Dorsolateral prefrontal cortex (tissue), 120 donors: ENCODE measurements at regions of chr2 and their contacts with region 1.

Region 1: GRCh38 chr2:134261398-134262131 is 7.7 kb downstream of the MGAT5 start:
- DNase-seq: no peak
- H3K4me3 ChIP-seq: no peak overlapping the region
- H3K27ac ChIP-seq: peak overlapping the region in 43 of 59 donors; percentile 1 to 97 (median 91)
- H3K27me3 ChIP-seq: no peaks in the 10 kb centered on the region
- CTCF ChIP-seq: no peak

Region 2: DNA sequence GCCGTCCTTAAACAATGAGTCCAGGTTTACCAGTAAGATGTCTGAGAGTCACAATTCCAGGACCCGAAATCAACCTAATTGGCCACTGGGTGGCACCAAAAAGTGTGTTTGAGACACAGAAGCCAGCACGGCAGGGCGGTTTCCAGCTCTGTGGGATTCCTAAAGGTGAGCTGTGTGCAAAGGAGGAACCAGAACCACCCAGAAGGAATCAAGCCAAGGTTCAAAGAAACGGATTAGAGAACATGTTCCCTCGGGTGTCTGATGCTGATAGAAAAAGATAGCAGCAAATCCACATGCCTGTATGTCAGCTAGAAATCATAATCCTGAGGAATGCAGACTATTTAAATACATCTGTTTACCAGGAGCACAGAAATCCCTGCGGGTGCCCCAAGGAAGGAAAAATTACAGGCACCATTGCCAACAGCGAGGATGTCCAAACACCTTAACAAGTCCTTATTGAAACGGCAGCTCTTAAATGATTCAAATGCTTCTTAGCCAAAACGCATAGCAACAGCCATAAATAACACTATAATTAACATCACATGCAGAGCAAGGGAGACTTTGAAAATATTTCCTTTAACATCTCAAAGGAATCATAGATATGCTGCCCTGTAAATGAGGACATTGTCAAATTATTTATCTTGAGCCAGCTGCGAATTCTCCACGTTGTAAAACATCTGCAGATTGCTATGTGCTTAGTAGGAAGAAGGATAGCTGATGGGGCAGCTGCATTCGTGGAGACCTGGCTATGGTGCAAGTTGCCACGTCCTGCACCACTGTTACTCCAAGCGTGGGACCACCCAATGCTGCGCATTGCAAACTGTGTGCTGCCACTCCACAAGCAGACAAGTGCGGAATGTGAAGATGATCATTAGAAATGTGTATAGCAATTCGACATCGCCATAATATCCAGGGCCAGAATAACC is 374.6 kb before region 1 on chr2:
- intact Hi-C with region 1: loop called in 1 of 2 experiments (anchors 10 kb)
- DNase-seq: peak; percentile 49 to 91 (median 84)
- H3K4me3 ChIP-seq: peak overlapping the region in 17 of 59 donors; percentile 1 to 37 (median 21)
- H3K27ac ChIP-seq: peak overlapping the region in 1 of 59 donors; percentile 10
- H3K27me3 ChIP-seq: peaks cover 0 to 2% (median 0%) of the 10 kb centered on the region in 45 donors
- CTCF ChIP-seq: peak; percentile 55 to 83 (median 72)

Region 3: DNA sequence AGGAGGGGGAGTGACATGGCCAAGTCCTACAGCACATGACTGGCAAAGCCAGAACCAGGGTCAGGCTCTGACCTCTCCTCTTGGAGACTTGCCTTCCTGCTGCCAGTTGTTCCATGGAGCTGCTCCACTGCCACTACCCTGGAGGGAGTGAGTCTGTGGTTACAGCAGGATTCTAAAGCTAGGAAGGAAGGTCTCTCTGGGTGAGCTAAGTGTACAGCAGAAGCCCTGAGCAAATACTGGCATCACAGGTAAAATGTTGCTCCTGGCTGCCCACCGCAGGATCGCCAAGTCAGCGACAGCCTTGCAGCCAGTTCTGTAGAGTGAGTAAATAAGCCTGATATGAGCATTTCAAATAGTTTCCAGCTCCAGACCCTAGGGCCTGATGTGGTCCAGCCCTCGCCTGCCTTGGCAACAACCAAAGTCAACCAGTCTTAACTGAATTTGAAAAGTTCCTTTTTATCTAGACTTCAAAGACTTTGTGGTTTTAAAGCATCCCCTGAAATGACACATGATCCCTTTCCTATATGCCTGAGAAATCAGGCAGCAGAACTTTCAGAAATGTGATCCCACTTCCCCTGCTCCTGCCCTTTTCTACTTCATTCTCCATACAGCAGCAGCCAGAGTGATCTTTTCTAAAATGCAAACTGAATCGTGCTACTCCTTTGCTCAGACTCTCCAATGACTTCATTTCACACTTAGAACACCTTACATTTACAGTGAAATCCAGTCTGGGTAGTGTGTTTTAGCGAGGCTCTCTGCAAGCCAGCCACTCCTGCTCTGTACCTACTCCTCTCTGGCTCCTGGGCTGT is 106.6 kb after region 1 on chr2:
- intact Hi-C with region 1: loop called in 1 of 2 experiments (anchors 10 kb)
- DNase-seq: no peak
- H3K4me3 ChIP-seq: no peak overlapping the region
- H3K27ac ChIP-seq: peak overlapping the region in 6 of 59 donors; percentile 8 to 40 (median 26)
- H3K27me3 ChIP-seq: no peaks in the 10 kb centered on the region
- CTCF ChIP-seq: no peak

Region 4: DNA sequence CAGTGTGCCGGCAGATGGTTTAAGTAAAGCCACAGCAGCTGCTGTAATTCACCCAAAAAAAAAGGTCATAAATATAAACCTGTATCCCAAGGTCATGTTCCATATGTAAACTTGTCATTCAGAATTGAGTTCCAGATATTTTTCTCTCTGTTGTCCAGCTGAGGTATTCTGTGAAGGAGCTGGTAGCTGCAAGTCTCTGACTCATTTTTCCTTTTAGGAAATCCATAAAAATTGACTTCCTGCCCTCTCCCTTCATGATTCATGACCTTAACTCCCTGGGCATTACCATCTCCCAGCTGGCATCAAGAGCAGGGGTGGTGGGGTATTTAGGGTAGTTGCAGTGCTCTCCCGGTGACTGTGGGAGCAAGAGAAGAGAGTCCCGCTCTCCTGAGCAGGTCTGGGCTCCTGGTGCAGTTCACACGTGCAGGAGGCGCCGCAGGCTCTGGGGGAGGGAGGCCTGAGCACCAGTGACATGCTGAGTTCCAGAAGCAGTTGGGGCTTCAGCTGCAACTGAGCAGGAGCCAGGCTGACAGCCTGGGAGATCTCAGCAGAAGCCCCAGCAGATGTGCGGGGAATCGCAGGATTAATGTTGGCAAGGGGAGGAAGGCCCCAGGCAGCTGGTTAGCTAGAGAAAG is 184.9 kb after region 1 on chr2:
- intact Hi-C with region 1: loop called in 1 of 2 experiments (anchors 10 kb)
- DNase-seq: peak in 2 of 10 donors; percentile 30 to 48
- H3K4me3 ChIP-seq: no peak overlapping the region
- H3K27ac ChIP-seq: peak overlapping the region in 33 of 59 donors; percentile 0 to 69 (median 42)
- H3K27me3 ChIP-seq: no peaks in the 10 kb centered on the region
- CTCF ChIP-seq: no peak